GM12878 (cell line): ENCODE measurements at regions of chr7 and their contacts with region 1.

Region 1: DNA sequence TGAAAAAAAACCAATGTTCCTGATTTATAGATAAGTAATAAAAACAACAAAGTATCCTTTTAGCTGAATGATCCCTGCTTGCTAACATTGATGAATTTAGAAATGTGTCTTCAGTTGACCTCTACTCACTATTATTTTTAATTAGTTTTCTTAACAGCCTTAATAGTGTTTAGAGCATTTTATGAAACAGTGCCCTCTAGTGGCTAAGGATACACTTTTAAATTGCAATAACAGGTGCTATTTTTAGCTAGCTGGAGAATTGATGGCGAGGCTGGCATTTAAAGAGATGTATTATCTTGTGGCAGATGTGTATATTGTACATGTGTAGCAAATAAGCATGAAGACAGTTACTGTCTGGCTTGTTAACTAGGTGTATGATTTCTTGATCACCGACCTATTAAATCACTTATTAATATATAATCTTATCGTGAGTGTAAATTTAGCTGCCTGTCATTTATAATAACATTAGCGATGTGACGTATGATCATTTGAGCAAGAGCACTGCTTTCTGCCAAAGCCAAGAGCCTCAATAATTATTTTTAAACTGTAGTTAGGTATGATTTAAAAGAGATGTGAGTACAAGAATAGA is 451.9 kb downstream of the DPP6 start:
- DNase-seq: no peak
- ATAC-seq: peak; percentile 43; the same call in 1 of the 3 replicates
- H3K4me3 ChIP-seq: no peak overlapping the region
- H3K27ac ChIP-seq: no peak overlapping the region
- H3K4me1 ChIP-seq: no peaks in the 10 kb centered on the region
- H3K27me3 ChIP-seq: no peaks in the 10 kb centered on the region
- CTCF ChIP-seq: peak in 2 of 3 experiments; percentile 40 to 42; a peak in 3 of 6 replicates
- EP300 ChIP-seq: no peak
- POLR2A ChIP-seq: no peak
- RAD21 ChIP-seq: peak; percentile 46

Region 2: GRCh38 chr7:153193144-153193595 is 1310.9 kb before region 1 on chr7:
- CTCF ChIA-PET with region 1: interaction called, 7 read pairs
- POLR2A ChIA-PET with region 1: no interaction called
- RAD21 ChIA-PET with region 1: no interaction called
- SMC1A ChIA-PET with region 1: no interaction called
- in situ Hi-C with region 1: no loop called
- intact Hi-C with region 1: loop called (anchors 5 kb)
- DNase-seq: no peak
- ATAC-seq: peak; percentile 84
- H3K4me3 ChIP-seq: no peak overlapping the region
- H3K27ac ChIP-seq: no peak overlapping the region
- H3K4me1 ChIP-seq: no peaks in the 10 kb centered on the region
- H3K27me3 ChIP-seq: no peaks in the 10 kb centered on the region
- CTCF ChIP-seq: peak; percentile 38 to 58 (median 53); a peak in 4 of 6 replicates
- EP300 ChIP-seq: no peak
- POLR2A ChIP-seq: no peak
- RAD21 ChIP-seq: peak; percentile 36

Region 3: GRCh38 chr7:154532771-154533170 is 28.7 kb after region 1 on chr7:
- CTCF ChIA-PET with region 1: interaction called, 12 read pairs
- POLR2A ChIA-PET with region 1: no interaction called
- RAD21 ChIA-PET with region 1: no interaction called
- SMC1A ChIA-PET with region 1: no interaction called
- in situ Hi-C with region 1: no loop called
- intact Hi-C with region 1: no loop called
- DNase-seq: no peak
- ATAC-seq: no peak
- H3K4me3 ChIP-seq: no peak overlapping the region
- H3K27ac ChIP-seq: no peak overlapping the region
- H3K4me1 ChIP-seq: no peaks in the 10 kb centered on the region
- H3K27me3 ChIP-seq: no peaks in the 10 kb centered on the region
- CTCF ChIP-seq: no peak
- EP300 ChIP-seq: no peak
- POLR2A ChIP-seq: no peak
- RAD21 ChIP-seq: no peak